Activated B cell treated with CpG ODN at 0.5 μM for 24 hours (primary cell): ENCODE measurements at regions of chr1 and their contacts with region 1.

Region 1: DNA sequence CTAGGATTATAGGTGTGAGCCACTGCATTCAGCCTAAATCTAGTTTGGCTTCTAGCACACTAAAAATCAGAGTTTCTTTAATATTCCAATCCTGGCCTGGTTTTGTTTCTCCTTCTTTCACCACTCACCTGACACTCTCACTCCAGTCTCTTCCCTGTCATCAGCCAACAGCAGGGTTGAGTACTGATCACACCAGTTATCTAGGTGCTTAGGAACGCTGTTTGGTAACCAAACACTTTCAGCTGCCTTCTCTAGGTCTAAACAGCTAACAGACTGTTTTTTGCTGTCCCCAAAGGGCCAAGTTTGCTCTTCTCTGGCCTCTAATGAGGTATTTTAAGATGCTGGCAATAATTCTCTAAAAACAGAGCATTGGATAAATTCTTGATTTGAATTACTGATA is 17.7 kb upstream of the FRRS1 start:
- DNase-seq: no peak
- ATAC-seq: no peak
- H3K4me3 Mint-ChIP-seq: peak overlapping the region; percentile 17
- H3K27ac Mint-ChIP-seq: no peak overlapping the region
- H3K4me1 Mint-ChIP-seq: peaks cover 37% of the 10 kb centered on the region
- H3K27me3 Mint-ChIP-seq: peaks cover 28% of the 10 kb centered on the region
- CTCF ChIP-seq: no peak

Region 2: DNA sequence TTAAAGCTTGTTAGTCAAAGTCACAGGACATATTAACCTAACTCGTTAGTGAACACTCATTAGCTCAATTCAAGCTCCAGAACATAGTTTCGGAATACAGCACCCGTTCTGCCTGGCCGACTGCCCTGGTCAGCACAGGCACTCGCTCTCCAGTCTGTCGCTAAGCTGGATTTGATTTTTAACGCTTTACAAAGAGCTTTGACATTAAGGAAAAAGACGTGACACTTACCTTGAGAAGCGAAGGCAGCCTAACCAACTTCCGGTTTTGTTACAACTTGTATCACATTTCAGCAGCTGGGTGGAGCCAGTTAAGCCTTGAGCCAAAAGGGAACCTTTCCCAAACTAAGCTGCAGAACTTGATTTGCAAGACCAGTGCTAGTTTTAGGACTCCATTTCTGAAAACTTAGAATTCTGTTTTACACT is 17.8 kb before region 1 on chr1 and contains the start of gene FRRS1:
- CTCF ChIA-PET with region 1: no interaction called
- POLR2A ChIA-PET with region 1: interaction called, 4 read pairs
- intact Hi-C with region 1: loop called (anchors 2 kb)
- DNase-seq: peak; percentile 18
- ATAC-seq: peak; percentile 69
- H3K4me3 Mint-ChIP-seq: peak within 1 kb of the TSS; percentile 98
- H3K27ac Mint-ChIP-seq: peak within 1 kb of the TSS; percentile 91
- H3K4me1 Mint-ChIP-seq: peaks cover 7% of the 10 kb centered on the region
- H3K27me3 Mint-ChIP-seq: peaks cover 9% of the 10 kb centered on the region
- CTCF ChIP-seq: no peak
- total RNA-seq, gene FRRS1: 1.1 and 1.2 TPM in 2 replicates

Region 3: DNA sequence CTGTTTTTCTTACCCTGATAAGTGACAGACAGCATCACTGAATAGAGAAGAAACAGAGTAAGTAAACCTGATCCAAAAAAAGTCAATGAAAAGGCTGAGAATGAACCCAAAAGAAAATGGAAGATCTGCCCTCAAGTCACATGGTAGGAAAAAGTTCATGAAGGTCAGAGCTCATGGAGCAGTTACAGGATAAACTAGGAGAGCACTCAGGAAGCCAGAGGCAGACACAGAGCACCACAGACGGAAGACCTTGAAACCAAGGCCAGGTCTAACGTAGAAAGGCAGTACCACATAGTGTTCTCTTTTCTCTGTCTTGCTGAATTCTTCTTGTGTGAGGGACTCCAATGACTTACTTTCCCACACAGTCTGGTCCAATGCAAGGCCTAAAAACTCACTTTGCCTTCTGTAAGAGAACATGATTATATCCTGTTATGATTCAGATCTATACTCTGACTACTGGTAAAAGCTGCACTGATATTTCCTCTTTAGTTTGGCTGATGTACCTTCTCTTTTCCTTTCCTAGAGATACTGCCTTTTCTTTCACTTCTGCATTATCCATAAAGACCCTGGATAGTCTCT is 522.7 kb after region 1 on chr1:
- CTCF ChIA-PET with region 1: no interaction called
- POLR2A ChIA-PET with region 1: no interaction called
- intact Hi-C with region 1: no loop called
- DNase-seq: no peak
- ATAC-seq: no peak
- H3K4me3 Mint-ChIP-seq: no peak overlapping the region
- H3K27ac Mint-ChIP-seq: no peak overlapping the region
- H3K4me1 Mint-ChIP-seq: no peaks in the 10 kb centered on the region
- H3K27me3 Mint-ChIP-seq: no peaks in the 10 kb centered on the region
- CTCF ChIP-seq: no peak